ENCODE measurements at regions of chr10 and their contacts with region 1.

Region 1: DNA sequence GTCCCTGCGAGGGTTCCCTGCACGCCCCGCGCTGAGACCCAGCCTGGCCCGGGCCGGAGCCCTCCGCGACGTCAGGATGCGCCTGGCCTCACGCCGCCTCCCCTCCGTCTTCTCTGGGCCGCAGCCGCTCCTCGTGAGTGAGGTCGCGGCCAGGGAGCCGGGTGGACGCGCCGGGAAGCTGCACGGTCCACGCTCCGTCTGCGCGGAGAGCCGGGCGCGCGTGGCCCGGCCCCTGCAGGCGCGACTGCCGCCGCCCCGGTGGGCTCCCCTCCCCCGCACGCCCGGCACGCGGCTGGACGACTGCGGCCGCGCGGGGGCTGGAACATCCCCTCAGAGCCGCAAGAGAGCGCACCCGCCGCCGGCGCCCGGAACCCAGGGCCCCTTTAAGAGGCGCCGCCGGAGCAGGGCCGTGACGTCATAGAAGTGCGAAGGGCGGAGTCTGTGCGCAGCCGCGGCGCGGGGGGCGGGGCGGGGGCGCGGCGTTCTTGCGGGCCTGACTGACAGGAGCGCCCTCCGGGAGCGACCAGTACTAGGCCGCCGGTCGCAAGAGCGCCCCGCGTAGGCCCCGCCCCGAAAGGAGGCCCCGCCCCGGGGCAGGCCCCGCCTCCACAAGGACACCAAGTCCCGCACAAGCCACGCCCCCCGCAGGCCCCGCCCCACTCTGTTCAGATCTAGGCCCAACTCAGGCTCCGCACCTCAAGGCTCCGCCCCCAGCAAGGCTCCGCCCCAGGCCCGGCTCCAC is 445 bp upstream of the INPP5A start:
- DNase-seq: peak; percentile 100
- ATAC-seq: peak; percentile 97

Region 2: DNA sequence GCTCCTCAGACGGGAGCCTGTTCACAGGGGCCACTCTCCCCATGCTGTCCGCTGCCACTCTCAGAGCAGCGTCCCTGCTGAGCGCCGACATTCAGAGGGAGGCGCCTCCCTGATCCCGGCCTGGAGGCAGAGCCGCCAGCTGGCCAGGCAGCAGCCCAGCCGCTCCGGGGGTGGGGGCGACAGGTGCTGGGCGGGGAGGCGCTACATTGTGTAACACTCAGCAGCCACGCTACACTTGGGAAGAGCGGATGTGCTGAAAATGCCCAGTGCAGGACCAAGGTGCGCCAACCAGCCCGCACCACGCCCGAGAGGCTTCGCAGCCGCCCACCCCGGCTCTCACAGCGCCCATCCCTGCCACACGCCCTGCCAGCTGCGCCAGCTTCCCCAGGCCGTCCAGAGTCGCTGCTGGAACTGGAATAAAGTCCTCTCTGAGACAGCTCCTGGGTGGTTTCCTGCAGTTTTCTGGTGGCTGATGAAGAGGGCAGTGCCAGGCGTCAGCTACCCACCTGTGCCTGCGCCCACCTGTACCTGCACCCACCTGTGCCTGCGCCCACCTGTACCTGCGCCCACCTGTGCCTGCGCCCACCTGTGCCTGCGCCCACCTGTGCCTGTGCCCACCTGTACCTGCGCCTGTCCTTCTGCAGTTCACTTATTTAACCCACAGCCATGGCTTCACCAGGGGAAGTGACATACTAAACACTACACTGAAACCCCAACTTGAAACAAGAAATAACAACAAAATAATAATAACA is 255.1 kb before region 1 on chr10:
- intact Hi-C with region 1: no loop called
- DNase-seq: no peak
- ATAC-seq: no peak

Region 3: DNA sequence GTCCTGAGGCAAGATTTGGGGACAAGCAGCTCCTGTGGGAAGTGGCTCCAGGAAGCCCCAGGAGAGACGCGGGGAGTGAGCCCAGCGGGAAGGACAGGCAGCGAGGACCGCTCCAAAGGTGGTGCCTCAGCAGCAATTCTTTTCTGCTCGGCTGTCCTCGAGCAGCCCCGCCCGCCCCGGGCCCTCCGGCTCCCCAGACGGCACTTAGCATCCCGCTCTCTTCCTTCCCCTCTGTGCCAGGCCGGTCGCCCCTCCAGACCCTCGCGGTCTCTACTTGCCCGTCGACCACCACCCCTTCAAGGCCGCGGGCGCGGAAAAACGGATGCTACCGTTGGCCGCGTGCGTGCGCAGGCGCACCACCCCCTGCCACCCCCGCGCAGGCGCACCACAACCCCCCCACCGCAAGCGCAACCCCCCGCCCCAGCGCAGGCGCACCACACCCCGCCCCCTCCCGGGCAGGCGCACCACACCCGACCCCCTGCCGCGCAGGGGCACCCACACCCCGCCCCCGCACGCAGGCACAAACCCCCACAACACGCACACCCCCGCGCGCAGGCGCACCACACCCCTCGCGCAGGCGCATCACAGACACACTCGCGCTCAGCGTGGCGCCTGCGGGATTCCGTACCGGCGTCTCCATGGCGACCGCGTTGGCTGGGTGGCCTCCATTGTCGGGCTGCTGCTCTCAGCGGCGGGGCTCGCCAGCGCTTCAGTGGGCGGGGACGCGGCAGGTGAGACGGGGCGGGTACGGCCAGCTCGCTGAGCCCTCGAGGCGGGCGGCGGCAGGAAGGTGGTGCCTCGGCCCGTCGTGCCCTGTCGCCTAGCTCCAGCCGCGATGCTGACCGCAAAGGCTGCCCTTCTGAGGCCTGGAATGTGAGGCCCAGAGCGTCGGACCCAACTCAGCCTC is 205.4 kb before region 1 on chr10 and contains the start of gene LRRC27:
- intact Hi-C with region 1: loop called (anchors 10 kb)
- DNase-seq: peak; percentile 99
- ATAC-seq: peak; percentile 95
- total RNA-seq, gene LRRC27: 4.2 TPM

Region 4: DNA sequence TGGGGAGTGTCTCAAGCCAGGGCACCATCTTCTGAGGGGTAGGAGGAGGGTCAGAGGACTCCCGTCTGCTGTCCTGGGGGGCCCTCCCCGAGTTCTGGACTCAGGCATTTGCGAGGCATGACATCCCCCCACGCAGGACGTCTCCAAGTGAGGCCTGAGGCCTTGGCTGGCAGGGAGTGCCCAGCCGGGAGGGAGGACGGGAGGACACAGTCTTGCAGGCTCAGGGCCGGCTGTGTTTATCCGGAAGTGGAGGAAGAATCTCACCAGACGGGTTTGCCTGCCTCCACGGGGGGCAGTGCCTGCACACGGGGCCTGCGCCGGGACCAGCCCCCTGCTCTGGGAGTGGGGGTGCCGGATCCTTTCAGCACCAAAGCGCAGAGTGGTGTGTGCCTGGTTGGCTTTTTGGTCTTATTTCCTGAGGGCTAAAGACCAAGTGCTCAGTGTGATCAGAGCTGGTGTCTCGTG is 129.3 kb before region 1 on chr10:
- intact Hi-C with region 1: no loop called
- DNase-seq: no peak
- ATAC-seq: peak; percentile 45

Region 5: DNA sequence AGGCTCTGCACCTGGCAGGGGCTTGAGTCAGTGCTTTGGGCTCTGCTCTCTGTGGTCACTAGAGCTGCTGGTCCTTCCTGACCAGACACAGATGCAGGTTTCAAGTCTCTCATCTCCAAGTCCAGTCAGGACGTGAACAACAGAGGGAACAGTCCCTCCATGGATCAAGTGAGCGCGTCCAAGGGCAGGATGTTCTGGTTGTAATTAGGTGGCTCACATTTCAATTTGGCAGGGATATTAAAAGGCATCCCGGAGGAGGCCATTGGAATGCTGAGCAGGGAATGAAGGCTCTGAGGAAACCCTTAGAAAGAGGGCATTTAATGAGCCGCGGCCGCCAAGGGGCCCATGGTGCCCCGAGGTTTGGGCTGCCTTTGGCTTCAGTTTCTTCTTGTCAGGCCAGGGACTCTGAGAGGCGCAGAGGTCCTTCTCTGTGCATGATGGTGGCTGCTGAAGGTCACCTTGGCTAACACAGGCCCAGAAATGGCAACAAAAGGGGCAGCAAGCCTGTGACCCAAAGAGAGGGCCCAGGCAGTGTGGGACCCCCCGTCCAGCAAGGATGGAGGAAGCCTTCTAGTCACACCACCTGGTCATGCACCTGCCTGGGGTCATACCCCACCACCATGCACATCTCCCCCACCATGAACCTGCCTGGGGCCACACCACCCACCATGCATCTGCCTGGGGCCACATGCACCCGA is 30.3 kb before region 1 on chr10:
- intact Hi-C with region 1: loop called (anchors 5 kb)
- DNase-seq: peak; percentile 46
- ATAC-seq: peak; percentile 54

Region 6: DNA sequence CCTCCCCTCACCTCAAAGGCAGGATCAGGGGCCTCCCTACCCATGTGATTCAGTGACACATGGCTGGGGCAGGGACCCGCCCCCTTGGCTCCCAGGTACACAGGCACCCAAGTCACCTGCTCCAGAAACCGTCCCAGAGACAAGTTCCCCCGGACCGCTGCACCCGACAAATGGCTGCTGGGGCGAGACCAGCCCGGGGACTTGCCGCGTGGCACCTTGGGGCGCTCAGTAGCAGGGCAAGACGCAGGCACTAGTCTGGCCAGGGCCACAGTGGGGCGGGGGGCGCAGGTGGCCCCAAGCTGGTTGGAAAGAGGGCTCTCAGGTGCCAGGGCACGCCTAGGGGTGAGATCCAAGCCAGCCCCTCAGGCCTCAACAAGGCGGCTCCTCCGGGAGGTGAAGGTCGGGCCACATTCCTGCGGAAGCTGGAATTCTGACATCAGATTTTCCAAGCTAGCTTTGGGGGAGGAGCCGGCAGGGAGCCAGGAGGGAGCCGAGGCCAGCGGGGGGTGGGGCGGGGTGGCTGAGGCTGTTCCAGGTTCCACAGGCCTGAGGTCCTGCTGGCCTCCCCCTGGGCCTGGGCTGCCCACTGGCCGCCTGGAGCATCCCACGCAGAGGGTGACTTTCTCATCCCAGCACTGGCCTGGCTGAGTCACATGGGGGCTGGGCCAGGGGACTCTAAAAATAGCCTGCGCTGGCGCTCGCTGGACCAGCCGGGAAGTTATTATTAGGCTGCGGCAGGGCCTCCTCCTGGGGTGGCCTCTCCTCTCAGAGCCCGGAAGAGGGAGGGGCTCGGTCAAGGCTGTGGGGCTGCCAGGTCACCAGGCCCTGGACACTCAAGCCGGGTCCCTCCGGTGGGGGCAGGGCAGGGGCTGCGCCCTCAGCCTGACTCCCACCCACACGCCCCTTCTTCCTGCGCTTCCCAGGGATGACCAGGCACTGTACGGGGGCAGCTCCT is 20.1 kb before region 1 on chr10:
- intact Hi-C with region 1: loop called (anchors 1 kb)
- DNase-seq: peak; percentile 93
- ATAC-seq: peak; percentile 91

Region 7: GRCh38 chr10:132575356-132576201 is 38.4 kb after region 1 on chr10:
- intact Hi-C with region 1: loop called (anchors 5 kb)
- DNase-seq: peak; percentile 76
- ATAC-seq: peak; percentile 43

Region 8: GRCh38 chr10:132588301-132589013 is 51.3 kb after region 1 on chr10:
- intact Hi-C with region 1: loop called (anchors 5 kb)
- DNase-seq: peak; percentile 84
- ATAC-seq: peak; percentile 49

Region 9: DNA sequence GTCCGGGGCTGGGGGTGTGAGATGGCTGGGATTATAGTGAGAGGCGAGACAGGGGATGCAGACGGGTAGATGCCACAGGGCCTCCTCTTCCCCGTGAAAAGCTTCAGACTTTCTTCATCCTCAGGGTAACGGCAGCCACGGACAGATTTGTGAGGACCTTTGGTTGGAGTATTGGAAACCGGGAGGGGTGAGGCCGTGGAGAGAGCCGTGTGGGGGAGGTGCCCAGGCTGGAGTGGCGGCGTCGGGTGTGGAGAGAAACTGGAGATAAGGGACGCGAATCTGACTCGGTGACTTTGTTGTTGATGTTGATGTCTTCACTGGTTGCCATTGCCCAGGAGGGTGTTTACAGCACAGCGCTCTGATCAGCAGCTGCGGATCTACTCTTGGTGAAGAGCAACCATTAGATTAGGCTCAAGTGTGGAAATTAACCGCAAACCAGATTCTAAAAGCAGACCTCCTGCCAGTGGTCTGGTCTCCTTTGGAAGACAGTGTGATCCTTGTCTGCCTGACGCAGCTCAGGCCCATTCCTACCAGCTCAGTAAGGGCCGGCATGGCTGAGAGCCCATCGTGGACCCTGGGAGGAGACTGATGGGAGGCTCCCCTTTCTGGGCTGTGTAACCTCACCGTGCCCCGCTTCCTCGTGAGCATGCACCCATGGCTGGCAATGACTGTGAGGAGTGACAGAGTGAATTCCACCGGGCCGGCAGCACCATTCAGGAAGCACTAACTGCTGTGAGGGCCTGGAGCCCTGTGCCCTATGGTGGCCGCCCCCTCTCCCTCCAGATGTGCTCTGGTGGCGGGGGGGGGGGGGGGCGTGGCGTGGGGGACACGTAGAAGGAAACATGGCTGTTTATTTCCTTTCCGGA is 90.8 kb after region 1 on chr10:
- intact Hi-C with region 1: loop called (anchors 2 kb)
- DNase-seq: no peak
- ATAC-seq: peak; percentile 1

Measured in Right ventricle myocardium inferior (tissue), 1 donor.